IMR-90 (cell line): ENCODE measurements at regions of chr4 and their contacts with region 1.

Region 1: DNA sequence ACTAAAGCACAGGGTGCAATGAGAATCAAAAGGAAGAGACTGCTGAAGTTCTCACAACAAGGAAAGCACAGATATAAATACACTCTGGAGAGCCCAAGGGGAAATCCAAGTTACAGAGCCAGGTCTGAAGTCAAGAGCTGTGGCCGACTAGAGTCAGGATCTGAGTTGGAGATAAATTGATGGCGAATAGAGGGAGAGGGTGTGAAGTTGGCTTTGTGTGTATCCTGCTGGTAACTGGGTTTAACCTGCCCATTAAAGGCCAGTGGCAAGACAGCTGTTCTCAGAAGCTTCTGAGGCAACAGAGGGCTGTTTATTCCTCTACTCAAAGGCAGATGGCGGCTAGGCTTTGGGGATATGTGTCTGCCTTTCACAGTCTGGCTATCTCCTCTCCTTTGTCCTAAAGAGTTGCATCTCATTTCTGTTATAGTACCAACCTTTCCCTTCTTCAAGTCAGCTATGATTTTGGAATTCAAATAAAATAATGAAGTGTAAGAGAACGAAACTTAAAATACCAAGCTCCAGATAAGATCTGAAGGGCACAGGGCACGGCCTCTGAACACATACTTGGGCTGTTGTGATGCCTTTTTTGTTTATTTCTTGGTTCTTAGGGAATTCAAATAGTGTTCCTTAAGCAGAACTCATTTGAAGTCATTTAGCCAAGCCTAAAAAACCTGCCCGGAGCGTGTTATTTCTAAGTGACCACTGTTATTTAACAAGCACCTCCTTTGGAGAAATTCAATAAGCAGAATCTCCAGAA is 142.1 kb downstream of the APBB2 start:
- DNase-seq: no peak
- ATAC-seq: no peak
- H3K4me3 ChIP-seq: no peak overlapping the region
- H3K27ac ChIP-seq: no peak overlapping the region
- H3K4me1 ChIP-seq: peaks cover 7% of the 10 kb centered on the region
- H3K27me3 ChIP-seq: no peaks in the 10 kb centered on the region
- CTCF ChIP-seq: no peak
- POLR2A ChIP-seq: no peak
- RAD21 ChIP-seq: no peak

Region 2: GRCh38 chr4:41024556-41025491 is 47.4 kb before region 1 on chr4:
- CTCF ChIA-PET with region 1: interaction called, 3 read pairs
- POLR2A ChIA-PET with region 1: no interaction called
- dilution Hi-C with region 1: no loop called
- in situ Hi-C with region 1: no loop called
- intact Hi-C with region 1: loop called (anchors 5 kb)
- DNase-seq: peak; percentile 31
- ATAC-seq: no peak; the same call in 1 of the 2 replicates
- H3K4me3 ChIP-seq: no peak overlapping the region
- H3K27ac ChIP-seq: no peak overlapping the region
- H3K4me1 ChIP-seq: peaks cover 9% of the 10 kb centered on the region
- H3K27me3 ChIP-seq: no peaks in the 10 kb centered on the region
- CTCF ChIP-seq: no peak
- POLR2A ChIP-seq: no peak
- RAD21 ChIP-seq: no peak

Region 3: GRCh38 chr4:41281038-41281634 is 208.9 kb after region 1 on chr4:
- CTCF ChIA-PET with region 1: no interaction called
- POLR2A ChIA-PET with region 1: no interaction called
- dilution Hi-C with region 1: no loop called
- in situ Hi-C with region 1: no loop called
- intact Hi-C with region 1: no loop called
- DNase-seq: peak; percentile 77
- ATAC-seq: peak; percentile 98
- H3K4me3 ChIP-seq: no peak overlapping the region
- H3K27ac ChIP-seq: no peak overlapping the region
- H3K4me1 ChIP-seq: peaks cover 2% of the 10 kb centered on the region; the same call in 1 of the 2 replicates
- H3K27me3 ChIP-seq: no peaks in the 10 kb centered on the region
- CTCF ChIP-seq: peak; percentile 94
- POLR2A ChIP-seq: no peak
- RAD21 ChIP-seq: peak; percentile 98

Region 4: DNA sequence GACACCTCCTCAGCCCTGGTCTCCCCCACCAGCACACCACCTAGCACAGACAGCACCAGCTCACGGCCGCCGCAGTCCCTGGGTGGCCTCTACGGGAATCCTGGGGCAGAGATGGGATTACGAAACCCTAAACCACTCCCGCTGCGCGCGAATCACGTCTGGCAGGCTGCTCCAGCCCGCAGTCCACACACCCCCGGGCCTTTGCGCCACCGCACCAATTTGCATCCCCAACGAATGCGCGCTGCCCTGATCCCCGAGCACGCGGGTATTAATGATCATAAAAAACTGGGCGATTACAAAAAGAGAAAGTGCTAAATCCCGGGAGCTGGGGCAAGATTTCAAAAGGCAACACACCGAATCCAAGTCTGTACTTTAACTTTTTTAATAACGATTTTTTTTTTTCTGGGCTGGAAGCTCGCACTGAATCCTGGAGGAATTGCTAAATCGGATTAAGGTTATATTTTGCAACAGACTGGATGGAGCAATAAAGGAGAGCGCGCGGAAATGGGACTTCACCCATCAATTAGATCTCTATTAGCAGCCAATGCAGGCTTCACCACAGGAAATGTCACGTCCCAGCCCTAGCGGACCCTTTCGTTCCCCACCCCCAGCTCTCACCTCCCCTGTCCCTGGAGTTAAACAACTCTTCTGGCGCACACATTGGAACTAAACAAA is 793.2 kb after region 1 on chr4:
- CTCF ChIA-PET with region 1: no interaction called
- POLR2A ChIA-PET with region 1: no interaction called
- dilution Hi-C with region 1: no loop called
- in situ Hi-C with region 1: no loop called
- intact Hi-C with region 1: no loop called
- DNase-seq: no peak
- ATAC-seq: no peak
- H3K4me3 ChIP-seq: no peak overlapping the region
- H3K27ac ChIP-seq: no peak overlapping the region
- H3K4me1 ChIP-seq: no peaks in the 10 kb centered on the region
- H3K27me3 ChIP-seq: peaks cover 49% of the 10 kb centered on the region
- CTCF ChIP-seq: no peak
- POLR2A ChIP-seq: no peak
- RAD21 ChIP-seq: no peak